ENCODE measurements at regions of chr17 and their contacts with region 1.

Region 1: DNA sequence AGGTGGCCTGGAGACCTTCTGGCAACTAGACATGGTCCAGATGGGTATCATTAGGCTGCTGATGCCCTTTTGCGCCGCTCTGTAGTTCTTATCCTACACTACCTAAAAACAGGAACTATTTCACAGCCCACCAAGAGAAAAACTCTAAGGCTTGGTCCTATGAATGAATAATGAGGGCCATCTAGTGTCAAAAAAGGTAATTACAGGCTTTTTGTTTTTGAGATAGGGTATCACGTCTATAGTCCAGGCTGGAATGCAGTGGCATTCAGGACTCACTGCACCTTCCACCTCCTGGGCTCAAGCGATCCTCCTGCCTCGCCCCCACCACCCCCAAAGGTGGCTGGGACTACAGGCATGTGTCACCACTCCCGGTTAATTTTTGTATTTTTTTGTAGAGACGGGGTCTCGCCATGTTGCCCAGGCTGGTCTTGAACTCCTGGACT is 20.9 kb downstream of the COIL start:
- DNase-seq: peak; percentile 58
- H3K4me3 ChIP-seq: no peak overlapping the region
- H3K27ac ChIP-seq: no peak overlapping the region
- H3K4me1 ChIP-seq: peaks cover 6% of the 10 kb centered on the region
- H3K27me3 ChIP-seq: no peaks in the 10 kb centered on the region

Region 2: GRCh38 chr17:55763851-55764250 is 1176.1 kb before region 1 on chr17:
- in situ Hi-C with region 1: no loop called
- DNase-seq: no peak
- H3K4me3 ChIP-seq: no peak overlapping the region
- H3K27ac ChIP-seq: no peak overlapping the region
- H3K4me1 ChIP-seq: peaks cover 3% of the 10 kb centered on the region
- H3K27me3 ChIP-seq: no peaks in the 10 kb centered on the region

Region 3: GRCh38 chr17:56592487-56593085 is 347.3 kb before region 1 on chr17:
- in situ Hi-C with region 1: loop called (anchors 10 kb)
- DNase-seq: peak; percentile 75
- H3K4me3 ChIP-seq: peak overlapping the region; percentile 76
- H3K27ac ChIP-seq: no peak overlapping the region
- H3K4me1 ChIP-seq: peaks cover 8% of the 10 kb centered on the region; the same call in 1 of the 2 replicates
- H3K27me3 ChIP-seq: peaks cover 25% of the 10 kb centered on the region

Region 4: GRCh38 chr17:56819431-56820145 is 120.3 kb before region 1 on chr17:
- in situ Hi-C with region 1: loop called (anchors 5 kb)
- DNase-seq: peak; percentile 71
- H3K4me3 ChIP-seq: no peak overlapping the region
- H3K27ac ChIP-seq: no peak overlapping the region
- H3K4me1 ChIP-seq: no peaks in the 10 kb centered on the region
- H3K27me3 ChIP-seq: no peaks in the 10 kb centered on the region

Region 5: GRCh38 chr17:57001548-57001947 is 61.6 kb after region 1 on chr17:
- in situ Hi-C with region 1: no loop called
- DNase-seq: no peak
- H3K4me3 ChIP-seq: no peak overlapping the region
- H3K27ac ChIP-seq: no peak overlapping the region
- H3K4me1 ChIP-seq: no peaks in the 10 kb centered on the region
- H3K27me3 ChIP-seq: no peaks in the 10 kb centered on the region

Measured in GM23248 (cell line).